GM12878 (cell line): ENCODE measurements at regions of chr11 and their contacts with region 1.

Region 1: DNA sequence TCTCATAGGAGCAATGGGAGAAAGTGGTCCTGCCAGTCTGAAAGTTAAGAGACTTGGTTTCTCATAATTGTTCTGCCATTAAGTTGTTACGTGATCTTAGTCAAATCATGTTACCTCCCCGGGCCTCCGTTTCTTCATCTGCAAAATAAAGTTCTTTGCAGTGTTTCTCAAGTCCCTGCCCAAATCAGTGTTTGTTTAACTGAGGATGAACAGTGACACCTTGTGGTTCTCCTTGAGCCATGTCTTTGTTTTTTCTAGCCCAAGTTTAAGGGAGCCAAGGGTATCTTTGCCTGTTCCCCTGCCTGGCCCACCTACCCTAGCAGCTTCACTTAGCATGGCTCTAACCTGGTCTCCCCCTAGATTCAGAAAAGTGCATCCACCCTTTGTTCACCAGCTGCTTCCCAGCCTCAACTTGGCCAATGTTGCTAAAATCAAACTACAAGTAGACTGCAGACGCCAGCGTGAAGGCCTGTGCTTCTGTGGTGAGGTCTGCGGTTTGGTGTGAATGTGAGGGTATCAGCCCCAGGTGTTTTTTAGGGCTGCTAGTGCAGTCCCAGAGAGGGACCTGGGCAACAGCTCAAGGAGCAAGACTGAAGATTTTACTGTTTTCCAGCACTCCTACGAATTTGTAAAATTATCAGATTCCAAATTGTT is 35.5 kb downstream of the FZD4 start:
- DNase-seq: no peak
- ATAC-seq: peak; percentile 82
- H3K4me3 ChIP-seq: no peak overlapping the region
- H3K27ac ChIP-seq: no peak overlapping the region
- H3K4me1 ChIP-seq: no peaks in the 10 kb centered on the region
- H3K27me3 ChIP-seq: peaks cover 2% of the 10 kb centered on the region in 2 experiments; a peak in 2 of 4 replicates
- CTCF ChIP-seq: peak; percentile 51 to 57 (median 56); a peak in 5 of 6 replicates
- EP300 ChIP-seq: no peak
- POLR2A ChIP-seq: no peak
- RAD21 ChIP-seq: peak; percentile 62

Region 2: GRCh38 chr11:85854557-85855340 is 1064.9 kb before region 1 on chr11:
- CTCF ChIA-PET with region 1: no interaction called
- POLR2A ChIA-PET with region 1: no interaction called
- RAD21 ChIA-PET with region 1: no interaction called
- SMC1A ChIA-PET with region 1: no interaction called
- in situ Hi-C with region 1: no loop called
- intact Hi-C with region 1: loop called (anchors 2 kb)
- DNase-seq: peak; percentile 57
- ATAC-seq: peak; percentile 100
- H3K4me3 ChIP-seq: peak overlapping the region; percentile 75
- H3K27ac ChIP-seq: peak overlapping the region; percentile 27; the same call in 1 of the 2 replicates
- H3K4me1 ChIP-seq: peaks cover 8% of the 10 kb centered on the region
- H3K27me3 ChIP-seq: no peaks in the 10 kb centered on the region
- CTCF ChIP-seq: peak; percentile 77 to 95 (median 82)
- EP300 ChIP-seq: no peak
- POLR2A ChIP-seq: peak; percentile 71
- RAD21 ChIP-seq: peak; percentile 83

Region 3: DNA sequence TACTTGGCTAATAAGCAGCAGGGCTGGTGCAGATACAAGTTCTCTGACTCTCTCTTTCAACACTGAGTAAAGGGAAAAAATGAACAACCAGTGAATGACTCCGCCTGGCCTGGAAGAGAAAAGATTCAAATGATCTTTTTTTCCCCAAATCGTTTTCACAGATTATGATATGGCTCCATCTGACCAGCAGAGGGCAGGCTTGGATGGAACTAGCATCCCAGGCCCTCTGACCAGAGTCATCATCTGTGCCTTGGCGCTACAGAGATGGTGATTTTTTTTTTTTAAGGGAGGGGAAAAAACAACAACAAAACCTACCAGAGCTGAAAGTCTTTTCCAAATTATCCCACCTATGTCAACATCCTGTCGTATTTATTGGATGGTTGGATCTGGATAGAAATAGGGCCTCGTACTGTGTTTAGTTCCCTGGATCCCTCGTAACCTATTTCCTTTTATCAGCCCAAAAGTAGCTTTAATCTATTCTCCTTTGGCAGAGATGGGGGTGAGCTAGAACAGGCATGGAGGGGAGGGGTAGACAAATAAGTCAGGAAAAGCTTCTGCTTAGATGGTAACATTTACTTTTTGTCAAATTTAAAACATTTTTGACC is 49.6 kb before region 1 on chr11:
- CTCF ChIA-PET with region 1: interaction called, 22 read pairs
- POLR2A ChIA-PET with region 1: no interaction called
- RAD21 ChIA-PET with region 1: interaction called, 6 read pairs
- SMC1A ChIA-PET with region 1: interaction called, 7 read pairs
- in situ Hi-C with region 1: no loop called
- intact Hi-C with region 1: loop called (anchors 1 kb)
- DNase-seq: no peak
- ATAC-seq: peak; percentile 90
- H3K4me3 ChIP-seq: no peak overlapping the region
- H3K27ac ChIP-seq: no peak overlapping the region
- H3K4me1 ChIP-seq: no peaks in the 10 kb centered on the region
- H3K27me3 ChIP-seq: no peaks in the 10 kb centered on the region
- CTCF ChIP-seq: peak; percentile 69 to 73 (median 70)
- EP300 ChIP-seq: no peak
- POLR2A ChIP-seq: no peak
- RAD21 ChIP-seq: peak; percentile 69

Region 4: GRCh38 chr11:87046824-87047223 is 127.1 kb after region 1 on chr11:
- CTCF ChIA-PET with region 1: no interaction called
- POLR2A ChIA-PET with region 1: no interaction called
- RAD21 ChIA-PET with region 1: no interaction called
- SMC1A ChIA-PET with region 1: no interaction called
- in situ Hi-C with region 1: no loop called
- intact Hi-C with region 1: no loop called
- DNase-seq: no peak
- ATAC-seq: no peak
- H3K4me3 ChIP-seq: no peak overlapping the region
- H3K27ac ChIP-seq: no peak overlapping the region
- H3K4me1 ChIP-seq: no peaks in the 10 kb centered on the region
- H3K27me3 ChIP-seq: no peaks in the 10 kb centered on the region
- CTCF ChIP-seq: no peak
- EP300 ChIP-seq: no peak
- POLR2A ChIP-seq: no peak
- RAD21 ChIP-seq: no peak